CD4-positive, alpha-beta memory T cell (primary cell): ENCODE measurements at regions of chr5 and their contacts with region 1.

Region 1: DNA sequence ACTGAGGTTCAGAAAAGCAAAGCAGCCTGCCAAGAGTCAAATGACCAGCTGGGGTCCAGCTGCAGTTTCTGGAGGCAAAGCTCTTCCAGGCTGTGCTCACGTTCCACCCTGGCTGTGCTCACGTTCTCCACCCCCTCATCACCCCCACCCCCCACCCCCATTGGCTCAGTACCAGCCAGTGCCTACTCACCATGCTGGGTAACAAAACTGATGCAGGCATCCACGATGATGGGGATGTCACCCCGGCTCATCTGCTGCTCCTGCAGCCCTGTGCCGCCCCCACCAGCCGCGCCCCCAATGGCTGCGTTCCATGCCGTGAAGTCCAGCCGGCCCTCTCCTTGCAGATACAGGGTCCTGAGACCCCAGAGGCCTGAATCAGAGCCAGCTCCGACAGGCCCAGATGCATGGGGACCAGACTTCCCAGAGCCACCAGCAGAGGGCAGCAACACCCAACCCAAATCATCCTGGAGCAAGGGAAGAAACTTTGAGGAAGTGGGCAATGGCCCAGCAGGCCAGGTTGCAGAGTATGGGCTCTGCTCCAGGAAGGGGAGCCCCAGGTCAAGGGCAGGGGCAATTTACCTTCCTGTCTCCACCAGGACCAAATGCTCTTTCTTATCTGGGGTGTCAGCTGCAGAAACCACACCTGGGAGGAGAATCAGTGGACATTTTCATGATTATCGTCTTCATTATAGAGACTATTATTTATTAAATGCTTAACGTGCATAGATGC is 13.7 kb upstream of the FCHSD1 start:
- DNase-seq: peak; percentile 58 to 69 (median 59)
- H3K4me3 ChIP-seq: no peak overlapping the region
- H3K4me3 Mint-ChIP-seq: no peak overlapping the region
- H3K27ac ChIP-seq: no peak overlapping the region
- H3K27ac Mint-ChIP-seq: no peak overlapping the region
- H3K4me1 ChIP-seq: no peaks in the 10 kb centered on the region
- H3K4me1 Mint-ChIP-seq: peaks cover 2 to 5% (median 4%) of the 10 kb centered on the region in 4 donors
- H3K27me3 ChIP-seq: no peaks in the 10 kb centered on the region
- H3K27me3 Mint-ChIP-seq: no peaks in the 10 kb centered on the region

Region 2: DNA sequence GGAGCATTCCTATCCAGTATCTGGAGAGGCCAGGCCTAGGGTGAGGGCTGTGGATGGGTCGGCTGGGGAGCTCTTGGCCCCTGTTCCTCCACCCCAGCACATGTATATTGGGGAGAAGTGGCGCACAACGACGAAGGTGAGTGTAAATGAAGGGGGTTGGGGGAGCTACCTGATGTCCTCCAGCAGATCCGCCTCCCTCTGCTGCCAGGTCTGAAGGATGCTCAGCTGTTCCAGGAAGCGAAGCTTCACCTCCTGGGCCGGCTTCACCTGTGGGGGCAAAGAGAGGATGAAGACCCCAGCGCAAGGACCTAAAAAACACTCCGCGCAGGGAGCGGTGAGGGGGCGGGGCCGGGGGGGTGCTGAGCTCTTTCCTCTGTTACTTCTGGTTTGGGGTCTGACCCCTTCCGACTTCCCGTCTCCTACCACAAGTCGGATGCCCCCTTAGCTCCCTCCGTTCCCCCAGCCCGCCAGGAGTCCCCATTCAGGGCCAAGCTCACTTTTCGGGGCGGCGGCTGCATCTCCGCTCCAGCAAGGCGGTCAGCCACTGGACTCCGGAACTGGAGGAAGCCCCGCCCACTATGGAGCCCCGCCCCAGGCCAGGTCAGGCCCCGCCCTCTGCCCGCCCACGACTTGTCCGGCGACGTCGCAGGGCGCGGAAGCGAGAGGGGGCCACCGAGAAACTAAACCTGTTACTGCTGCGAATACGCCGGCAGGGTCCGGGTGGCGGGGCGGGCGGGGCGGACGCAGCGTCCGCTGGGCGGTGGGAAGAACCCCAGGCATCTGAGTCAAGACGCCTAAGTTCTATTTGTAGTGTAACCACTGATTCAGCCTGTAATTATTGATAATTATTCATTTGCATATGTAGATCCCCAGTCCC is 13.8 kb before region 1 on chr5 and contains the start of gene FCHSD1:
- CTCF ChIA-PET with region 1: interaction called, 12 read pairs
- POLR2A ChIA-PET with region 1: interaction called, 3 read pairs
- intact Hi-C with region 1: no loop called
- DNase-seq: peak; percentile 75 to 81 (median 76)
- H3K4me3 ChIP-seq: peak within 1 kb of the TSS; percentile 42 to 74
- H3K4me3 Mint-ChIP-seq: peak within 1 kb of the TSS; percentile 87 to 96 (median 93)
- H3K27ac ChIP-seq: peak within 1 kb of the TSS; percentile 50
- H3K27ac Mint-ChIP-seq: peak within 1 kb of the TSS; percentile 86 to 97 (median 94)
- H3K4me1 ChIP-seq: peaks cover 29% of the 10 kb centered on the region
- H3K4me1 Mint-ChIP-seq: peaks cover 27 to 49% (median 38%) of the 10 kb centered on the region in 4 donors
- H3K27me3 ChIP-seq: no peaks in the 10 kb centered on the region
- H3K27me3 Mint-ChIP-seq: no peaks in the 10 kb centered on the region
- total RNA-seq, gene FCHSD1: 106 to 110 TPM

Region 3: GRCh38 chr5:141681695-141682641 is 17.1 kb after region 1 on chr5 and contains the start of gene ARAP3:
- CTCF ChIA-PET with region 1: interaction called, 15 read pairs
- POLR2A ChIA-PET with region 1: interaction called, 3 read pairs
- intact Hi-C with region 1: no loop called
- DNase-seq: peak in 2 of 5 donors; percentile 24 to 47
- H3K4me3 ChIP-seq: peak within 1 kb of the TSS in 1 of 2 donors; percentile 17
- H3K4me3 Mint-ChIP-seq: peak within 1 kb of the TSS; percentile 78 to 86 (median 83)
- H3K27ac ChIP-seq: no peak within 1 kb of the TSS
- H3K27ac Mint-ChIP-seq: peak within 1 kb of the TSS; percentile 47 to 91 (median 77)
- H3K4me1 ChIP-seq: peaks cover 33% of the 10 kb centered on the region
- H3K4me1 Mint-ChIP-seq: peaks cover 14 to 36% (median 26%) of the 10 kb centered on the region in 4 donors
- H3K27me3 ChIP-seq: no peaks in the 10 kb centered on the region
- H3K27me3 Mint-ChIP-seq: peaks cover 0 to 2% of the 10 kb centered on the region in 2 donors
- total RNA-seq, gene ARAP3: 14.7 to 16.4 TPM

Region 4: DNA sequence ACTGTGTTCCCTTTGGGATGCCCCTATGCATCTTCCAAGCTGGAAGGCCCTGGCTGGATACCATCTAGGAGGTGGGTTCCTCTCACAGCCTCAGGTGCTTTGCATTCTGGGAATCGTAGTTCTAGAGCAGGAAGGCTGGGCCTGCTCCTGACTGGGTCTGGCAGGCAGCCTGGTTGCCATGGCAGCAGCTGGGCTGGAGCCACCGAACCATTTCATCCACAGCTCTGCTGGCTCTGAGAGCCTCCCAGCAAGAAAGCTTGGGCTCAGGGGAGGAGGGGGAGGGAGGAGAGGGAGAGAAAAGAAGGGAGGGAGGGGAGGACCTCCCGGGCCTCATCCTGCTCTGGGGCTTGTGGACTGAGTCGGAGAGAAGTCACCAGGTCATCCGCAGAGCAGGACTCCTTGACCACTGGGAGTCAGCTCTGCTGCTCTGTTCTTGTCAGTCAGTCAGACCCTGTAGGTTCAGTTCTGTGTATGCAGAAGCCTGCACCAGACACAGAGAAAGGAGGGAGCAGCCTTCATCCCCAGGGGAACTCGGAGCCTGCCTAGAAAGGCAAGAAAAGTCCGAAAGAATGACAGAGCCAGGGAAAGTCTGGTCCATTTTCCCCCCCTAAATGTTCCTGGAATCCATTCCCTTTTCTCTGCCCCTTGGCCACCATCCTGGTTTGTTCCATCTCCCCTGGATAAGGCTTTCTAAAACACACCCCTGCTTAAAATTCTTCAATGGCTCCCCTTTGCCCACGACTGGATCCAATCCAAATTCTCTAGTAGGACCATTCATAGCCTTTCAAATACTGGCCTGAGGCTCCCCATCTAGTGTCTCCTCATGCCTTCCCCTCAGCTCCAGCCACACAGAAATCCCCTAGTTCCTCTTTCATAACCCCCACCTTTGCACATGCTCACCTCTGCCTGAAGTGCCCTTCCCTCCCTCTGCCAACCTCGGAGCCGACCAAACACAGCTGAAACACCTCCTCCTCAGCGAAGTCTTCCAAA is 82.5 kb after region 1 on chr5:
- CTCF ChIA-PET with region 1: no interaction called
- POLR2A ChIA-PET with region 1: no interaction called
- intact Hi-C with region 1: no loop called
- DNase-seq: no peak
- H3K4me3 ChIP-seq: no peak overlapping the region
- H3K4me3 Mint-ChIP-seq: no peak overlapping the region
- H3K27ac ChIP-seq: no peak overlapping the region
- H3K27ac Mint-ChIP-seq: no peak overlapping the region
- H3K4me1 ChIP-seq: no peaks in the 10 kb centered on the region
- H3K4me1 Mint-ChIP-seq: no peaks in the 10 kb centered on the region
- H3K27me3 ChIP-seq: peaks cover 6% of the 10 kb centered on the region
- H3K27me3 Mint-ChIP-seq: peaks cover 34 to 38% of the 10 kb centered on the region in 2 donors

Region 5: GRCh38 chr5:141811287-141812155 is 146.6 kb after region 1 on chr5:
- CTCF ChIA-PET with region 1: interaction called, 42 read pairs
- POLR2A ChIA-PET with region 1: no interaction called
- intact Hi-C with region 1: loop called (anchors 1 kb)
- DNase-seq: peak in 4 of 5 donors; percentile 4 to 45 (median 17)
- H3K4me3 ChIP-seq: no peak overlapping the region
- H3K4me3 Mint-ChIP-seq: peak overlapping the region in 1 of 8 donors; percentile 26
- H3K27ac ChIP-seq: no peak overlapping the region
- H3K27ac Mint-ChIP-seq: no peak overlapping the region
- H3K4me1 ChIP-seq: no peaks in the 10 kb centered on the region
- H3K4me1 Mint-ChIP-seq: peaks cover 0 to 3% (median under 1%) of the 10 kb centered on the region in 4 donors
- H3K27me3 ChIP-seq: peaks cover 15% of the 10 kb centered on the region
- H3K27me3 Mint-ChIP-seq: peaks cover 30 to 64% of the 10 kb centered on the region in 2 donors

Region 6: DNA sequence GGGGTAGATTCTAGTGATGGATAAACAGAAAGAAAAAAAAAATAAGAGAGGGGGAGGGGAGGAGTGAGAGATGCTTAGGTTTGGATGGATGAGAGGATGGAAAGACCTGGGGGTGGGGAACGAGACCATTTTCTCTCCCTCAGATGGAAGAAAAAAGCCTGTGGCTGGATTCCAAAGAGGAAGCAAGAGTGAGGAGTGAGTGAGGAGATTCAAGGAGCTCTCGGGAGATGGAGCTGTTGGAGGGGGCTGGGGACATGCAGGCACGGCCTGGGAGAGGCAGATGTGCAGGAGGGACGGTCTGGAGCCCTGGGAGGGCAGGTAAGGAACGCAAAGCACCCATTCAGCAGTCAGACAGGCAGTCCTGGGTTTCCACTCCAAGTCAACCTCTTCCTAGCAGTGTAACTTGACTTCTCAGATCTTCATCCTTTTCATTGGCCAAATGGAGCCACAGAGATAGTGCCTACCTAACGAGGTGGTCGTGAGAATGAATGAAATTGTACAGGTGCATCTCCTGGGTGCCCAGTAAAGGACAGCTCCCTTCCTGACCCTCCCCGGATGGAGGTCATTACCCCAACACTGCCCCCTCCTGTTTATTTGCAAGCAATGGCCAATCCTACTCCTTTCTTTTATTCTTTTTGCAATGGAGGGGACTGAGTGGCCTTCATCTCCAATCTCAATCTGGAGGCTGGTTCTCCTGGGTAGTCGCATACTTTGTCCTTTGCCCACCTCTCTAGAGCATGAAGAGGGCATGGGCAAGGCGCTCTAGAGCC is 161.1 kb after region 1 on chr5:
- CTCF ChIA-PET with region 1: interaction called, 27 read pairs
- POLR2A ChIA-PET with region 1: no interaction called
- intact Hi-C with region 1: loop called (anchors 1 kb)
- DNase-seq: peak in 2 of 5 donors; percentile 4 to 7
- H3K4me3 ChIP-seq: no peak overlapping the region
- H3K4me3 Mint-ChIP-seq: no peak overlapping the region
- H3K27ac ChIP-seq: no peak overlapping the region
- H3K27ac Mint-ChIP-seq: no peak overlapping the region
- H3K4me1 ChIP-seq: no peaks in the 10 kb centered on the region
- H3K4me1 Mint-ChIP-seq: peaks cover 0 to 3% (median 0%) of the 10 kb centered on the region in 4 donors
- H3K27me3 ChIP-seq: no peaks in the 10 kb centered on the region
- H3K27me3 Mint-ChIP-seq: peaks cover 4 to 10% of the 10 kb centered on the region in 2 donors

Region 7: DNA sequence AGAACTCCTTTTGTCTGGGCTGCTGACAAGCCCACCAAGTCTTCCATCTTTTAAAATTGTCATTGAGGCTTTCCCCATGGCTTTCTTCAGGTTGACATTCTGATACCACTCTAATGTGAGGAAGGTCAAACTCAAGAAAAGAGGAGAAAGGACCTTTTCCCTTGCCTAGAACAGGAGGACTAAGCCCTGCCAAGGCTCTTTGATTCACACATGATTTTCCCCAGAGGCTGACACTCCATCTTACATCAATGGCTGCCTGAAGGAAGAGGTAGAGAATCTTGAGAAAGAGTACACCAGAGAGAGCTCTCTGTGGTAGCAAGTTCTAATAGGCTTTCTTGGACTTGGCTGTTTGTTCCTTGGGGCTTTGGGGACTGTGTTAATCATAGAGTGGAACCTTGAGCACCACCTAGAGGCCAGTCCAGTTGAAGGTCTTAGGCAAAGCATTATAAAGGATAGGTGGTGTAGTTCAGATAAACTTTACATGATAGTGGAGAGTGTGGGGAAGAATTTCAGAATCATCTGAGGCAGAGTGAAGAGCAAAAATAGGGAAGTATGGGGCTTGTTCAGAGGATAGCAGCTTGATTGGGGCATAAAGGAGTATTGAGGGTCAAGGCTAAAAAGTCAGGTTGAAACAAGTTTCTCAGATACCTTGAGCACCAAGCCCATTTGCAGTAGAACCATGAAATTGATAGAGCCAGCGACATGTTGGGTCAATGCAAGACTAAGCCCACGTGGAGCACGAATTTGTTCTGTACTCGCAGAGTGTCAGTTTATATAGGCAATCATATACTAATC is 480.4 kb after region 1 on chr5:
- CTCF ChIA-PET with region 1: interaction called, 4 read pairs
- POLR2A ChIA-PET with region 1: no interaction called
- intact Hi-C with region 1: loop called (anchors 10 kb)
- DNase-seq: peak; percentile 54 to 66 (median 57)
- H3K4me3 ChIP-seq: no peak overlapping the region
- H3K4me3 Mint-ChIP-seq: no peak overlapping the region
- H3K27ac ChIP-seq: no peak overlapping the region
- H3K27ac Mint-ChIP-seq: no peak overlapping the region
- H3K4me1 ChIP-seq: no peaks in the 10 kb centered on the region
- H3K4me1 Mint-ChIP-seq: no peaks in the 10 kb centered on the region
- H3K27me3 ChIP-seq: no peaks in the 10 kb centered on the region
- H3K27me3 Mint-ChIP-seq: no peaks in the 10 kb centered on the region

Region 8: GRCh38 chr5:142156839-142157463 is 492.1 kb after region 1 on chr5:
- CTCF ChIA-PET with region 1: no interaction called
- POLR2A ChIA-PET with region 1: no interaction called
- intact Hi-C with region 1: no loop called
- DNase-seq: no peak
- H3K4me3 ChIP-seq: no peak overlapping the region
- H3K4me3 Mint-ChIP-seq: no peak overlapping the region
- H3K27ac ChIP-seq: no peak overlapping the region
- H3K27ac Mint-ChIP-seq: peak overlapping the region in 3 of 7 donors; percentile 31 to 62 (median 36)
- H3K4me1 ChIP-seq: no peaks in the 10 kb centered on the region
- H3K4me1 Mint-ChIP-seq: peaks cover 1 to 9% (median 7%) of the 10 kb centered on the region in 4 donors
- H3K27me3 ChIP-seq: no peaks in the 10 kb centered on the region
- H3K27me3 Mint-ChIP-seq: no peaks in the 10 kb centered on the region